PC-9 (cell line): ENCODE measurements at regions of chr7 and their contacts with region 1.

Region 1: DNA sequence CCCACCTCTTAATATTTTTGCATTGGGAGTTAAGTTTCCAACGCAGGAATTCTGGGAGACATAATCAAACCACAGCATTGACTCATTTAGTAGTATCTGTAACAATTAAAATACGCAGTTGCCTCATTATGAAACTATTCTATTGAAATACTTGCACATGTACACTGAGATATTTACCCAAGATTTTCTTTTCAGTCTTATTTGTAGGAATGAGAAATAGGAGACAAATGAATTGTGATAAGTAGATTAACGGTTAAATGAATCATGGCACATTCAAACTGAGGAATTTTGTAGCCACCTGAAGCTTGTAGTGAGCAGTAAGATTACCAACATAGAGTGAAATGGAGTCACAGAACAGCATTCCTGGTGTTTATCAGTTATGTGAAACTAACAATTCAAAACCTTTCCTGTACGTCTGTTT is 18.1 kb downstream of the RP9 start:
- DNase-seq: peak in 1 of 2 experiments; percentile 68
- H3K4me3 ChIP-seq: no peak overlapping the region
- H3K27ac ChIP-seq: no peak overlapping the region
- H3K4me1 ChIP-seq: no peaks in the 10 kb centered on the region
- H3K27me3 ChIP-seq: no peaks in the 10 kb centered on the region
- CTCF ChIP-seq: no peak

Region 2: DNA sequence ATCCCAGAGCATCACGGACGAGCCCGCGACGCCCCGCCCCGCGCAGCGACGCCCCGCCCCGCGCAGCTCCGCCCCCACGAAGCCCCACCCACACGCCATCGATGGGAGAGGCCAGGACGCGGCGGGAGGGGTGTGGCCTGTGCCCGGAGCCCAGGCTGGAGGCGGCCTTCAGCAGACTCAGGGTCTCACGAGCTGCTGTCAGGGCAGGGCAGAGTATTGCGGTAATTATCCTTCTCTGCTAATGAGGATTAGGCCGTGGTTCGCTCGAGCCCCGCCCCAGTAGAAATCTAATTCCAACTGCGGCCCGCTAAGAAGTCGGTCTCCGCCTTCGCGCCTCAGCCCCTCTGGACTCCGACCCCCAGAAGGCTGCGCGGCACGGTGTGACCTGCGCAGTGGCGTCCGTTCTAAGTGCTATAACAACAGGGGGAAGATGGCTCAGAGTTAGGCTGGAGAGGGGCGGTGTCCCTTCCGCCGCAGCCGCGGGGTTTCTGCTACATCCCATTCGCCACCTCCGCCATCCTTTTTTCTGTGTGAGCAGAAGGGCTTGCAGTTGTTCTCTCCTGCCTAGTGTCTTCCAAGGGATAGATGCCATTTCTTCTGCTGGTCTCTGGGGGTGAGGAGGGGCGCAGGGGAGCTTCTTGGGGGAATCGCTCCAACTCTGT is 28.2 kb before region 1 on chr7:
- CTCF ChIA-PET with region 1: no interaction called
- POLR2A ChIA-PET with region 1: no interaction called
- intact Hi-C with region 1: loop called (anchors 2 kb)
- DNase-seq: peak; percentile 91 to 95
- H3K4me3 ChIP-seq: peak overlapping the region; percentile 80
- H3K27ac ChIP-seq: no peak overlapping the region
- H3K4me1 ChIP-seq: peaks cover 21% of the 10 kb centered on the region
- H3K27me3 ChIP-seq: no peaks in the 10 kb centered on the region
- CTCF ChIP-seq: no peak

Region 3: DNA sequence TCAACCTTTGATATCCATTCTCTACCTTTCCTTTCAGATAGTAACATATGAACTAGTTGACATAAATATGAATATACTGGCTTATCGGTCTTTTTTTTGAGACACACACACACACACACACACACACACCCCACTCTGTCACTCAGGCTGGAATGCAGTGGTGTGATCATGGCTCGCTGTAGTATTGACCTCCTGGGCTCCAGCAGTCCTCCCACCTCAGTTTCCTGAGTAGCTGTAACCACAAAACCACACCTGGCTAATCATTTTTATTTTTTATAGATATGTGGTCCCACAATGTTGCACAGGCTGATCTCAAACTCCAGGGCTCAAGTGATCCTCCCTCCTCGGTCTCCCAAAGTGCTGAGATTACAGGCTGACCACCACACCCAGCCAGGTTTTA is 14.4 kb before region 1 on chr7:
- CTCF ChIA-PET with region 1: no interaction called
- POLR2A ChIA-PET with region 1: no interaction called
- intact Hi-C with region 1: no loop called
- DNase-seq: no peak
- H3K4me3 ChIP-seq: no peak overlapping the region
- H3K27ac ChIP-seq: no peak overlapping the region
- H3K4me1 ChIP-seq: 0 out of 2 replicates have a peak, but pooled peaks cover 7% of the 10 kb centered on the region
- H3K27me3 ChIP-seq: peaks cover 47% of the 10 kb centered on the region; the same call in 1 of the 2 replicates
- CTCF ChIP-seq: no peak

Region 4: GRCh38 chr7:33114976-33115375 is 23.9 kb after region 1 on chr7:
- CTCF ChIA-PET with region 1: no interaction called
- POLR2A ChIA-PET with region 1: no interaction called
- intact Hi-C with region 1: no loop called
- DNase-seq: no peak
- H3K4me3 ChIP-seq: no peak overlapping the region
- H3K27ac ChIP-seq: no peak overlapping the region
- H3K4me1 ChIP-seq: peaks cover 4% of the 10 kb centered on the region
- H3K27me3 ChIP-seq: 0 out of 2 replicates have a peak, but pooled peaks cover 10% of the 10 kb centered on the region
- CTCF ChIP-seq: no peak